HCT116 (cell line): ENCODE measurements at regions of chr20 and their contacts with region 1.

Region 1: DNA sequence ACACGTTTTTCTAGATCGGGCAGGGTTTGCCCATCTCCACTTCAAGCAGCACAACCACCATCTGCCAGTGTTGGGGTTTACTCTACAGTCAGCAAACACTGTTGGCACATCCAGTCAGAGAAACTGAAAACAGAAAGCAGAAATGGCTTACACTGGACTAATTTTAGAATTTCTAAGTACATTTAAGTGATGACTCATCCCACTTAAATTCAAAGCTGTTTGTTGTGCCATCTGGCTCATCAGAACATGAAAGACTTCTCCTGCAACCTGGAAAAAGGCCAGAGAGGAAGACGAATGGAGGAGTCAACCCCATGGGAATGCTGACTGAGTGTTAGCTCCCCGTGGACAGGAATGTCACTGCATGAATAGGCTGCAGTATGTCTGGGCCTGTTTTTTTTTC is 21.8 kb downstream of the FAM209B start:
- DNase-seq: peak; percentile 90
- ATAC-seq: peak; percentile 87
- H3K4me3 ChIP-seq: peak overlapping the region in 1 of 2 experiments; percentile 33; a peak in 3 of 4 replicates
- H3K27ac ChIP-seq: peak overlapping the region; percentile 36; the same call in 1 of the 2 replicates
- H3K4me1 ChIP-seq: peaks cover 18 to 42% of the 10 kb centered on the region in 2 experiments
- H3K27me3 ChIP-seq: no peaks in the 10 kb centered on the region
- CTCF ChIP-seq: peak in 2 of 3 experiments; percentile 13 to 23; a peak in 2 of 6 replicates
- POLR2A ChIP-seq: no peak
- RAD21 ChIP-seq: peak; percentile 32; the same call in 1 of the 2 replicates

Region 2: GRCh38 chr20:56574531-56575142 is 19.8 kb after region 1 on chr20:
- CTCF ChIA-PET with region 1: interaction called, 15 read pairs
- POLR2A ChIA-PET with region 1: interaction called, 3 read pairs
- RAD21 ChIA-PET with region 1: interaction called, 3 to 7 read pairs
- intact Hi-C with region 1: loop called (anchors 1 kb)
- DNase-seq: no peak
- ATAC-seq: peak; percentile 51; the same call in 1 of the 2 replicates
- H3K4me3 ChIP-seq: no peak overlapping the region
- H3K27ac ChIP-seq: no peak overlapping the region
- H3K4me1 ChIP-seq: peaks cover 4 to 27% of the 10 kb centered on the region in 2 experiments; a peak in 2 of 4 replicates
- H3K27me3 ChIP-seq: no peaks in the 10 kb centered on the region
- CTCF ChIP-seq: no peak
- POLR2A ChIP-seq: no peak
- RAD21 ChIP-seq: no peak

Region 3: DNA sequence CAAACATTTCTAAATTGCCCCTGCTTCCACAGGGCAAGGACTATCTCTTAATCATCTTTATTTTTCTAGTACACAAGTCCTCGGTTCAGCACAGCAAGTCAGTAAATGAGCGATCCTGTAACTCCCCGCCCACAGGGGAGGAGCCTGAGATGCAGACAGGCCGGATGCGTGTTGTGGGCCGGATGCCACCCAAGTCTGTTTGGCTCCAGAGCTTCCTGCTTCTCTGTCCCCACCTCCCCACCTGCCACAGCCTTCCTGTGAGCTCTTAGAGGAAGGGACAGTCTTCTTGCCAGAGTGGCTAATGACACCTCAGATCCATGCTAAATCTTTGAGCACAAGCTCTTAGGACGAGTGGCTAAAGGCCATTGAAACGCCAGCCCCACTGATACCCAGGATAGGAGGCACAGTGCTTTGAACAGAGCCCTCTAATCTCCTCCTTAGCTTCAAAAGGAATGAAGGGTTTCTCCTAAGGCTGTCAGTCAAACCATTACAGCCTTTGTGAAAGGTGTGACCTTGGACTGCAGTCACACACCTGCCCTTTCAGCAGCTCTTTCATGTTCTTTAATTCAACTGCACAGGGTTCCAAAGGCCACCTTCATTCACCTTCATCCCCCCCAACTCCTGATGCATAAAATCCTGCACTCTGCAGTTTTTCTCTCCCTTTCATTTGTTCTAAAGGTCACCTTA is 338.5 kb after region 1 on chr20:
- CTCF ChIA-PET with region 1: no interaction called
- POLR2A ChIA-PET with region 1: no interaction called
- RAD21 ChIA-PET with region 1: no interaction called
- intact Hi-C with region 1: no loop called
- DNase-seq: no peak
- ATAC-seq: peak; percentile 62
- H3K4me3 ChIP-seq: no peak overlapping the region
- H3K27ac ChIP-seq: no peak overlapping the region
- H3K4me1 ChIP-seq: no peaks in the 10 kb centered on the region
- H3K27me3 ChIP-seq: no peaks in the 10 kb centered on the region
- CTCF ChIP-seq: no peak
- POLR2A ChIP-seq: no peak
- RAD21 ChIP-seq: no peak

Region 4: DNA sequence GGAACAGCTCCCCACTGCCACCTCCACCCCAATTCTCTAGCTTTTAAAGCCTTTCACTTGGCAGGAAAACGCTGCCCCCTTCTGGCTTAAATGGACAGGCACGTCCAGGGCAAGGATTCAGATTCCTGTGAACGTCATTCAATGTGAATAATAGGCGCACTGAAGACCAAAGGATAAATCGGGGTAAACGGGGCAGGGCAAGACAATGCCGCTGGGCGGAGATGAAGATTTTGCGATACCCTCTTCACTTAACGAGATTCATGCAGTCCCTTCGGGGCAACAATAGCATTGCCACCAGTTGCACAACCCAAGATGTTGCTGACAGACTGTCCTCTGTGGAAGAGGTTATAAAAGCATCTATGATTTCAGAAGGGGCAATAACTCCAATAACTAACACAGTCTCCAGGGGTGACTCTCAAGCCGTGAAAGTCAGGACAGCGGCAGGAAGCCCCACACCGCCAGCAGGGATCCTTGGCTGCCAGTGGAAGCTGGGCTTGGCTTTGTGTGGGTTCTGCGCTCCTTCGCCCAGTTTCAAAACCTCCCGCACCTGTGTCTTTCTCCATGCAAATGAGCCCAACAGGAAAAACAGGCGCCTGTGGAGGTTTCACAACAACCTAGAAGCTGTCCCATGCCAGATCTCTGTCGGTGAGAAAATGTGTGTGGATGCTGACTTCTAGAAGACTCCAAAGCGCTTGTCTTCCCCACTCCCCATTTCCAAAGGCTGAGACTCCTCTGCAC is 419.8 kb after region 1 on chr20:
- CTCF ChIA-PET with region 1: interaction called, 19 read pairs
- POLR2A ChIA-PET with region 1: no interaction called
- RAD21 ChIA-PET with region 1: no interaction called
- intact Hi-C with region 1: loop called (anchors 1 kb)
- DNase-seq: peak; percentile 47
- ATAC-seq: peak; percentile 90
- H3K4me3 ChIP-seq: peak overlapping the region in 1 of 2 experiments; percentile 16; a peak in 1 of 4 replicates
- H3K27ac ChIP-seq: no peak overlapping the region
- H3K4me1 ChIP-seq: peaks cover 0 to 5% of the 10 kb centered on the region in 2 experiments; a peak in 2 of 4 replicates
- H3K27me3 ChIP-seq: no peaks in the 10 kb centered on the region
- CTCF ChIP-seq: peak; percentile 82 to 89 (median 87)
- POLR2A ChIP-seq: no peak
- RAD21 ChIP-seq: peak; percentile 90

Region 5: DNA sequence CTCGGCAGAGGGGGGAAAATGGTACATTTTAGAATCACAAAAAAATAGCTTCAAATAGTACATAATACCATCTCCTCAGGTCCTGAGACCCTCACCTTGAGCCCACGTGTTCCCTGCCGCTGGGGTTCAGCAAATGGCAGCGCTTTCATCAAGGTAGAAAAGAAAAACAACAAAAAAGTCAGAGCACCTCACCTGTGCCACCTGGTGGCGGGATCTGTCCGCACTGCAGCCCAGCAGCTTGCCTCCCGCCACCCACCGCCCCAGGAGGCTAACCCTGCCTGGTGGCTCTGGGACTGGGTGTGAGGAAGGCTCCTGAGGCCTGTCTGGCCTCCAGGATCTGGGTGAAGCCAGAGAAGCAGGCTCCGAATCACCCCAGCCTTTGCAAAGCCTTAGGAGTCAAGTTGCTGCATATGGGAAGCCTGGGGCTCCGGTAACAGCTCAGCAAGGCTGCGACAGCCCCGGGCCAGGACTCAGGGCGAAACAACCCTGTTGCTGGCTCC is 440.8 kb after region 1 on chr20:
- CTCF ChIA-PET with region 1: interaction called, 17 read pairs
- POLR2A ChIA-PET with region 1: no interaction called
- RAD21 ChIA-PET with region 1: interaction called, 3 to 4 read pairs
- intact Hi-C with region 1: loop called (anchors 1 kb)
- DNase-seq: peak; percentile 29
- ATAC-seq: peak; percentile 97
- H3K4me3 ChIP-seq: no peak overlapping the region
- H3K27ac ChIP-seq: no peak overlapping the region
- H3K4me1 ChIP-seq: no peaks in the 10 kb centered on the region
- H3K27me3 ChIP-seq: no peaks in the 10 kb centered on the region
- CTCF ChIP-seq: peak; percentile 52 to 85 (median 81); a peak in 5 of 6 replicates
- POLR2A ChIP-seq: no peak
- RAD21 ChIP-seq: peak; percentile 62

Region 6: GRCh38 chr20:57061058-57061900 is 506.4 kb after region 1 on chr20:
- CTCF ChIA-PET with region 1: interaction called, 19 read pairs
- POLR2A ChIA-PET with region 1: no interaction called
- RAD21 ChIA-PET with region 1: interaction called in 1 of 2 experiments, 3 read pairs
- intact Hi-C with region 1: no loop called
- DNase-seq: no peak
- ATAC-seq: peak; percentile 75
- H3K4me3 ChIP-seq: no peak overlapping the region
- H3K27ac ChIP-seq: no peak overlapping the region
- H3K4me1 ChIP-seq: peaks cover 0 to 6% of the 10 kb centered on the region in 2 experiments; a peak in 1 of 4 replicates
- H3K27me3 ChIP-seq: peaks cover 22% of the 10 kb centered on the region; the same call in 1 of the 2 replicates
- CTCF ChIP-seq: peak; percentile 27 to 62 (median 48); a peak in 5 of 6 replicates
- POLR2A ChIP-seq: no peak
- RAD21 ChIP-seq: peak; percentile 66